AG04449 (cell line): ENCODE measurements at regions of chr6 and their contacts with region 1.

Region 1: DNA sequence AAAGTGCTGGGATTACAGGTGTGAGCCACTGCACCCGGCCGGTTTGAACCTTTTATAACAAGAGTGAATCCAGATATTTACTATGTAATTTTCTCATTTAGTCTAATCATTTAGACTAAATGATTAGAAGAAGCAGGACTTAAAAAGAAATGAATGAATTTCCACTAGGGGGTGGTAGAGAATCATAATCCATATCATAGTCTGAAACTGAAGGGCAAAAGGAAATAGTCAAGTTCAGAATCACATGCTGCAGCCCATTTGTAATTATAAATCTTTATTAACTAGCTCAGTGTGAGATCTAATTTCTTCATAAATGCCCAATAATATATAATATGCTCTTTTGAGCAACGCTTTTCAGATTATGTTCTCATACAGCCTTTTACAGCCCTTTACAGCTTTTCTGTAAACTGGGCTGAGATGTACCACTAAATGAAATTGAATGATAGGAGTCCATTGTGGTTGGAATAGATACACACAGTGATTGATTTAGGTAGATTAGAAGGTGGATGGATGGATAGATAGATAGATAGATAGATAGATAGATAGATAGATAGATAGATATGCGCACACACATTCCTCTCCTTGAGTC is 31.8 kb downstream of the PSMB9 start:
- DNase-seq: no peak
- H3K4me3 ChIP-seq: no peak overlapping the region
- CTCF ChIP-seq: peak; percentile 19

Region 2: DNA sequence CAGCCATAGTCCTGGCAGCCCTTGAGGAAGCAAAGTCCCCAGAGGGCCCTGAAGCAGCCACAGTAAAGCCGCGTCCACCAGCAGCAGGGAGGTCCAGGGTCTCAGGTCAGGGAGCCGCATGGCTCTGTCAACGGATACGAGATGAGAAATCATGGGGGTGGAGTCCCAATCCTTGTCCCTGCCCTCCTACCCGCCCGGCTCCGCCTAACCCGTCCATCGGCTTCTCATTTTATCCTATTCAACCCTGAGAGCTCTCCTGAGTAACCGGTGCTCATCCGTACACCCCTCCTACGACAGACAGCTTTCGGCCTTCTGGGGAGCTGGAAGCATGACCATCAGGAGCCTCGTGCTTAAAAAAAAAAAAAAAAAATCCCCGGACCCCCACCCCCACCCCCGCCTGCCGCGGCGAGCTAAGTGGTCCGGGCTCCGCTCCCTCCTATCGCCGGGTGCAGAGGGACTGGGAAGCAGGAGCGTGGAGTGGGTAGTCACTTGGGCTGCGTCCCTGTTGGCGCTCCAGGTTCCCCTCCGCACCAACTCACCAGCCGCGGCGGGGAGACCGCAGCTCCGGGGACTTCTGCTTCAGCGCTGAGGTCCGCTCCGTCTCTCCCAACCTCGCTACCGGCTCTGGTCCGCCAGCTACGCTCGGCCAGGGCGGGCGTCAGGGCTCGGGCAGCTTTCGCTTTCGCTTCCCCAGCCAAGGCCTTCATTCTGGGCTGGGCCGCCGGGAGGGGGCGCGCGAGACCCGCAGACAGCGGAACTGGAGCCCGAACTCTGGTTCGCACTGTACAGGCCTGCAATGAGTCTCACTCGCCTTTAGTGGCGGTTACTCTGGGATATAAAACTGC is 47.5 kb before region 1 on chr6 and contains the start of gene TAP2:
- CTCF ChIA-PET with region 1: interaction called, 402 read pairs
- POLR2A ChIA-PET with region 1: no interaction called
- DNase-seq: peak; percentile 47
- H3K4me3 ChIP-seq: peak within 1 kb of the TSS; percentile 96
- CTCF ChIP-seq: peak; percentile 97

Region 3: GRCh38 chr6:32933636-32934085 is 47.9 kb after region 1 on chr6:
- CTCF ChIA-PET with region 1: interaction called, 19 read pairs
- POLR2A ChIA-PET with region 1: interaction called, 4 read pairs
- DNase-seq: no peak
- H3K4me3 ChIP-seq: no peak overlapping the region
- CTCF ChIP-seq: peak; percentile 73

Region 4: DNA sequence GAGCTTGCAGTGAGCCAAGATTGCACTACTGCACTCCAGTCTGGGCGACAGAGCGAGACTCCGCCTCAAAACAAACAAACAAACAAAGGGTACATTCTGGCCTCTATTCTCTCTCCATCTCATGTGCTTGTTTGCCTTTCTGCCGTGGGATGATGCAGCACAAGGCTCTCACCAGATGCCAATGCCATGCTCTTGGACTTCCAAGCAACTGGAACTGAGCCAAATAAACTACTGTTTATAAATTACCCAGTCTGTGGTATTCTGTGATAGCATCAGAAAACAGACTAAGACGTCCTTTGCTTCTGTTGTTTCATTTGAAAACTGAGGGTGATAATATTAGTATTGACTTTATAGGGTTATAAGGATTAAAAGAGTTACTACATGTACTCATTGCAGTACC is 79.0 kb after region 1 on chr6:
- CTCF ChIA-PET with region 1: interaction called, 50 read pairs
- POLR2A ChIA-PET with region 1: no interaction called
- DNase-seq: no peak
- H3K4me3 ChIP-seq: no peak overlapping the region
- CTCF ChIP-seq: no peak

Region 5: DNA sequence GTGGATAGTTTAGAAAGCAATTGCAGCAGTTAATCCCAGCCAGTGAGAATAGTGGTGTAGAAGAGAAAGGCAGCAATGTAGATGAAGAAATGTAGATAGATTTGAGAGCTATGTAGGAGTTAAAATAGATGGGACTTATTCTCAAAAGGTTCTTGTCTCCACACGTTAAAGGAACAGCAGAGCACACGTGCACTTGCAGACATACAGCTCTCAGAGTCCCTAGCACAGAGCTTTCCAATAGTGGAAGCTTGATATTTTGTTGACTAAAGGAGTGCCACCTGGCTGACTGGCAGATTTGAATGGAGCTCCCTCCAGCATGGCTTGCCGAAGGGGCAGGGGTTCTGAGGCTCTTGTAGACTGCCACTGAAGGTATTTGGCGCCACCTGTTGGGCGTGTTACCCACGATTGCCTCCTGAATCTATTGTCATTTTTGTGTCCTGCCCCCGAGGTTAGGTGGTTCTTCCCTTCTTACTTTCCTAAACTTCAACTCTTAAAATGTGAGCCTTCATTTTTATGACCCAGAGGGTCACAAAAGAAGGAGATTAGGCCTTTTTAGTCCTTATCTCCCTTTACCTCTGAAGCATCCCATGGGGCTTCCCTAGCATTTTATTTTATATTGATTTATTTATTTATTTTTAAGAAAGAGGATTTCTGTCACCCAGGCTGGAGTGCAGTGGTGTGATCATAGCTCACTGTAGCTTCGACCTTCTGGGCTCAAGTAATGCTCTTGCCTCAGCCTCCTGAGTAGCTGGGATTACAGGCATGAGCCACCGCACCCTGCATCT is 99.0 kb after region 1 on chr6:
- CTCF ChIA-PET with region 1: interaction called, 182 read pairs
- POLR2A ChIA-PET with region 1: interaction called, 4 read pairs
- DNase-seq: no peak
- H3K4me3 ChIP-seq: no peak overlapping the region
- CTCF ChIP-seq: peak; percentile 82

Region 6: GRCh38 chr6:33082702-33083101 is 196.9 kb after region 1 on chr6:
- CTCF ChIA-PET with region 1: interaction called, 11 read pairs
- POLR2A ChIA-PET with region 1: no interaction called
- DNase-seq: no peak
- H3K4me3 ChIP-seq: no peak overlapping the region
- CTCF ChIP-seq: peak; percentile 58